CD4-positive, alpha-beta memory T cell (primary cell): ENCODE measurements at regions of chr12 and their contacts with region 1.

Region 1: DNA sequence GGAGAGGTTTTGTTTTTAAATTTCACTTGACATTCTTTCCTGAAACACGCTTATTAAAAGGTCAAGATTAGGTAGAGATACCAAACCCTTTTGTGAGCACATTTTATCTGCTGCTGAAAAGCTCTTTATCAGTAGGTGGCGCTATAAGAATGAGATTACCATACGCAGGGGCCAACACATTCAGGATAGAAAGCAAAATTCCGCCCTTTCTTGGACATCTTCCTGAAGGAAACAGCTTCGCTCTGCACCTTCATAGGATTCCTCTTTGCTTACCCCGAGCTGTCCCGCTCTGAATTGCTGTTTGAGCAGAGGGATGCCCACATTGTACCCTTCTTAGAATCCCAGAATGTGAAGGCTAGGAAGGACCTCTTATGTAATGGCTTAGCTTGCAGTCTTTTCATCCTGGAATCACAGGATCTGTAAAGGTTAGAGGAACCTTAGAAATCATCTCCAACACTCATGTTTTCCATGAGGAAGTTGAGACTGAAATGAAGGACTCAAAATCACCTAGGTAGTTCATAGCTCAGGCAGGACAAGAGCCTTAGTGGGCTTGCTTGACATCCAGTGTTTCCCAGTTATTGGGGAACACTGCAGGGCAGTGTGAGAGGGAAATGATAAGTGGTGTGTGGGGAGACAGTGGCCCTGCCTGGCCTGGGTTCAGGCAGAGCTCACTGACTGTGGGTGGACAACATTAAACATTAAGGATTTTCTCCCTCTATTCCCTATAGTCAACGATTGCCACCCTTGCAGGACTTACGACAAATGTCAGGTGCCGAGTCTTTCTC is 38.7 kb upstream of the CRY1 start:
- DNase-seq: peak in 4 of 5 donors; percentile 42 to 49 (median 45)
- H3K4me3 ChIP-seq: no peak overlapping the region
- H3K4me3 Mint-ChIP-seq: no peak overlapping the region
- H3K27ac ChIP-seq: no peak overlapping the region
- H3K27ac Mint-ChIP-seq: peak overlapping the region in 1 of 7 donors; percentile 62
- H3K4me1 ChIP-seq: no peaks in the 10 kb centered on the region
- H3K4me1 Mint-ChIP-seq: peaks cover 0 to 6% (median under 1%) of the 10 kb centered on the region in 4 donors
- H3K27me3 ChIP-seq: no peaks in the 10 kb centered on the region
- H3K27me3 Mint-ChIP-seq: no peaks in the 10 kb centered on the region

Region 2: GRCh38 chr12:106733700-106734099 is 398.3 kb before region 1 on chr12:
- CTCF ChIA-PET with region 1: no interaction called
- POLR2A ChIA-PET with region 1: no interaction called
- intact Hi-C with region 1: no loop called
- DNase-seq: no peak
- H3K4me3 ChIP-seq: no peak overlapping the region
- H3K4me3 Mint-ChIP-seq: no peak overlapping the region
- H3K27ac ChIP-seq: no peak overlapping the region
- H3K27ac Mint-ChIP-seq: no peak overlapping the region
- H3K4me1 ChIP-seq: no peaks in the 10 kb centered on the region
- H3K4me1 Mint-ChIP-seq: peaks cover 1 to 10% (median 7%) of the 10 kb centered on the region in 4 donors
- H3K27me3 ChIP-seq: no peaks in the 10 kb centered on the region
- H3K27me3 Mint-ChIP-seq: no peaks in the 10 kb centered on the region

Region 3: DNA sequence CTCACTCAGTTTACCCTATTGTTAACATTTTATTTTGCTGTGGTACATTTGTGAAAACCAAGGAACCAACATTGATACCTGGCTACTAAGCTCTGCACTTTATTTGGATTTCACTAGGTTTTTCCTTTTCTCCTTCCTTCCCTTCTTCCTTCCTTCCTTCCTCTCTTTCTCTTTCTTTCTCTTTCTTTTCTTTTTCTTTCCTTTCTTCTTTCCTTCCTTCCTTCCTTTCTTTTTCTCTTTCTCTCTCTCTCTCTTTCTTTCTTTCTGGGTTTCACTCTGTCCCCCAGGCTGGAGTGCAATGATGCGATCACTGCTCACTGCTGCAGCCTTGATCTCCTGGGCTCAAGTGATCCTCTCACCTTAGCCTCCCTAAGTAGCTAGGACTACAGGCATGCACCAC is 205.4 kb before region 1 on chr12:
- CTCF ChIA-PET with region 1: no interaction called
- POLR2A ChIA-PET with region 1: no interaction called
- intact Hi-C with region 1: no loop called
- DNase-seq: no peak
- H3K4me3 ChIP-seq: no peak overlapping the region
- H3K4me3 Mint-ChIP-seq: no peak overlapping the region
- H3K27ac ChIP-seq: no peak overlapping the region
- H3K27ac Mint-ChIP-seq: no peak overlapping the region
- H3K4me1 ChIP-seq: no peaks in the 10 kb centered on the region
- H3K4me1 Mint-ChIP-seq: no peaks in the 10 kb centered on the region
- H3K27me3 ChIP-seq: no peaks in the 10 kb centered on the region
- H3K27me3 Mint-ChIP-seq: peaks cover 10 to 12% of the 10 kb centered on the region in 2 donors

Region 4: DNA sequence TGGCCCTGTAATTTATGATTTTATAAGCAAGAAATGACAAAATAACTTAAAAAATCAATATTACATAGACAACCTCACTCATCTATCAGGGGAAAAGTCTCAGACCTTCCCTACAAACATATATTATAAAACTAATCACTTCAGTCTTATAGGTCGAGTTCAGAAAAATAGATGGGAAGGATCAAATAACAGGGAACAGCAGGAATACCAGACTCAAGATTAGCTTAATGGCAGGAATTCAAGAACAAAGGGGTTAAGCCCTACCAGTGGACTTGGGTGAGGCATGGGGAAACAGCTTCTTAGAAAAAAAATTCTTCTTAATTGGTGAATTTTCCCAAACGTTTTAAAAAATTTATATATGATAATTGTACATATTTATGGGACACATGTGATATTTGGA is 13.0 kb after region 1 on chr12:
- CTCF ChIA-PET with region 1: interaction called, 21 read pairs
- POLR2A ChIA-PET with region 1: no interaction called
- intact Hi-C with region 1: no loop called
- DNase-seq: no peak
- H3K4me3 ChIP-seq: no peak overlapping the region
- H3K4me3 Mint-ChIP-seq: no peak overlapping the region
- H3K27ac ChIP-seq: no peak overlapping the region
- H3K27ac Mint-ChIP-seq: no peak overlapping the region
- H3K4me1 ChIP-seq: no peaks in the 10 kb centered on the region
- H3K4me1 Mint-ChIP-seq: no peaks in the 10 kb centered on the region
- H3K27me3 ChIP-seq: no peaks in the 10 kb centered on the region
- H3K27me3 Mint-ChIP-seq: peaks cover 2 to 3% of the 10 kb centered on the region in 2 donors

Region 5: DNA sequence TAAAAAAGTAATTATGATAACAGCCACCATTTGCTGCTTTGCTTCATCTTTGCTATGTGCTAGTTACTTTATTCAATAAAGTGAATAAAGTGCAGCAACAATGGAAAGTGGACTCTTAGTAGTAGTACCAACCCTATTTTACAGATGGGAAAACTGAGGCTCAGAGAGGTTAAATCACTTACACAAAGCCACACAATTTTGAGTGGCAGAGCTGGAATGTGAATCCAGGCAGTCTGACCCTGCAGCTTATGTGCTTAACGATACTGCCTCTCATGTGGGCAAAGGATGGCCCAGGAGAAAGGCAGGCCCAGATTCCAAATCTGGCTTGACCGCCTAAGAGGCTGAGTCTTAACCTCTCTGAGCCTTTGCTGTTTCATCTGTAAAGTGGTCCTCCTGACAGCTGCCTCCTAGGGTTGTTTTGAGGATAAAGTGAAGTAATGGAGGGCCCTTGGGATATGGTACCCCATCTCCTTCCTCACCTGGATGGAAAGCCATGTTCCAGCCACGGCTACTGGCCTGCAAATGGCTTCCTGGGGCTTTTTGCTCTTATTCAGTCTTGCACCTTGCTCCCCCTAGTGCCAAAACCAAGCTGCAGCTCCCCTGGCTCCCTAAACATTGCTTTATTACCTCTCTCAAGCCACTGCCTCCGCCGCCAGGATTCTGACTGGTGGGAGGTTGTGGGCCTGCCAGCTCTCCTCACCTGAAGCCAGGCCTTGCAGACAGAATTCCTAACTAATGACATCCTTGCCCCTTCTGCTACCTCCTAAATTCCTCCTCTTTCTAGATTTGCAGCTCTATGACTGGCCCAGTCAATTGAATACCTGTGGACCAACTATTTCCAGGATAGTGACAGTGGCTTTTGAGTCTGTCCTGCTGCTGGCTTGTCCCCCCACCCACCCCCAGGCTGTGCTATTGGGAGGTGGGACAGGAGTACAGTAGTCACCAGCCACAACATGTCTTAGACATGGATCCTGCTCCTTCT is 270.3 kb after region 1 on chr12:
- CTCF ChIA-PET with region 1: interaction called, 171 read pairs
- POLR2A ChIA-PET with region 1: interaction called, 4 read pairs
- intact Hi-C with region 1: loop called (anchors 1 kb)
- DNase-seq: peak in 4 of 5 donors; percentile 49 to 58 (median 52)
- H3K4me3 ChIP-seq: no peak overlapping the region
- H3K4me3 Mint-ChIP-seq: peak overlapping the region in 1 of 8 donors; percentile 27
- H3K27ac ChIP-seq: no peak overlapping the region
- H3K27ac Mint-ChIP-seq: peak overlapping the region in 4 of 7 donors; percentile 51 to 88 (median 71)
- H3K4me1 ChIP-seq: peaks cover 11% of the 10 kb centered on the region
- H3K4me1 Mint-ChIP-seq: peaks cover 6 to 30% (median 14%) of the 10 kb centered on the region in 4 donors
- H3K27me3 ChIP-seq: no peaks in the 10 kb centered on the region
- H3K27me3 Mint-ChIP-seq: no peaks in the 10 kb centered on the region

Region 6: GRCh38 chr12:107607464-107608392 is 475.7 kb after region 1 on chr12:
- CTCF ChIA-PET with region 1: interaction called, 313 read pairs
- POLR2A ChIA-PET with region 1: interaction called, 3 read pairs
- intact Hi-C with region 1: loop called (anchors 1 kb)
- DNase-seq: peak; percentile 67 to 75 (median 70)
- H3K4me3 ChIP-seq: no peak overlapping the region
- H3K4me3 Mint-ChIP-seq: no peak overlapping the region
- H3K27ac ChIP-seq: no peak overlapping the region
- H3K27ac Mint-ChIP-seq: peak overlapping the region in 1 of 7 donors; percentile 35
- H3K4me1 ChIP-seq: no peaks in the 10 kb centered on the region
- H3K4me1 Mint-ChIP-seq: peaks cover 0 to 3% (median 0%) of the 10 kb centered on the region in 4 donors
- H3K27me3 ChIP-seq: no peaks in the 10 kb centered on the region
- H3K27me3 Mint-ChIP-seq: no peaks in the 10 kb centered on the region

Region 7: GRCh38 chr12:107884769-107885694 is 753.0 kb after region 1 on chr12:
- CTCF ChIA-PET with region 1: no interaction called
- POLR2A ChIA-PET with region 1: no interaction called
- intact Hi-C with region 1: loop called (anchors 5 kb)
- DNase-seq: peak in 4 of 5 donors; percentile 6 to 21 (median 18)
- H3K4me3 ChIP-seq: no peak overlapping the region
- H3K4me3 Mint-ChIP-seq: no peak overlapping the region
- H3K27ac ChIP-seq: no peak overlapping the region
- H3K27ac Mint-ChIP-seq: peak overlapping the region in 2 of 7 donors; percentile 15 to 28
- H3K4me1 ChIP-seq: no peaks in the 10 kb centered on the region
- H3K4me1 Mint-ChIP-seq: peaks cover 0 to 2% (median 0%) of the 10 kb centered on the region in 4 donors
- H3K27me3 ChIP-seq: no peaks in the 10 kb centered on the region
- H3K27me3 Mint-ChIP-seq: peaks cover 6 to 21% of the 10 kb centered on the region in 2 donors